Activated CD4-positive, alpha-beta T cell treated with anti-CD3 and anti-CD28 coated beads for 36 hours (primary cell): ENCODE measurements at regions of chr10 and their contacts with region 1.

Region 1: GRCh38 chr10:50624866-50625692 is 1.3 kb upstream of the SGMS1 start:
- DNase-seq: peak; percentile 76
- ATAC-seq: peak; percentile 30
- H3K4me3 Mint-ChIP-seq: peak overlapping the region; percentile 78
- H3K27ac Mint-ChIP-seq: peak overlapping the region; percentile 94
- H3K4me1 Mint-ChIP-seq: peaks cover 39% of the 10 kb centered on the region
- H3K27me3 Mint-ChIP-seq: no peaks in the 10 kb centered on the region

Region 2: GRCh38 chr10:49538381-49539319 is 1086.4 kb before region 1 on chr10 and contains the start of gene ERCC6:
- CTCF ChIA-PET with region 1: no interaction called
- POLR2A ChIA-PET with region 1: no interaction called
- intact Hi-C with region 1: loop called in 1 of 2 experiments (anchors 1 kb)
- DNase-seq: peak; percentile 98
- ATAC-seq: peak; percentile 96
- H3K4me3 Mint-ChIP-seq: peak within 1 kb of the TSS; percentile 78
- H3K27ac Mint-ChIP-seq: peak within 1 kb of the TSS; percentile 90
- H3K4me1 Mint-ChIP-seq: peaks cover 34% of the 10 kb centered on the region
- H3K27me3 Mint-ChIP-seq: peaks cover 9% of the 10 kb centered on the region
- total RNA-seq, gene ERCC6: 15.0 to 15.8 TPM

Region 3: DNA sequence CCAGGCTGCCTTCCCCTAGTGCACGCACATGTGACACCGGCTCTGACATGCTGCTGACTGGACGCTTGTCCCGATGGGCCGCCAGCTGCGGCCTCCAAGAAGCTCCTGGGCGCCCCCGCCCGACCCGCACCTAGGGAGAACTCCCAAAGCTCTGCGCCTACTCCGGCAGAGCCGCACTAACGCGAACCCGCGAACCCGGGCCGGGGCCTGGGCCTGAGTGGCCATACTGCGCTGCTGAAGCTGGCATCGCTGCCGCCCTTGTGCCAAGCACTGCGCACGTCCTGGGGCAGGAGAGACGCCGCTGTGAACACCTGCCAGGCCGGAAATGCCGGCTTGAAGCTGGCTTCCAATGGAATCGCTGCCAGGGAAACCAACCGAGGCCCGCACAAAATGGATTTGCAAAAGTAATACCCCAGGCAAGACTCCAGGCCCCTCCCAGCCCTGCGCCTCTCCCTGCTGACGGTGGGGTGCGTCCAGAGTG is 472.2 kb before region 1 on chr10:
- CTCF ChIA-PET with region 1: no interaction called
- POLR2A ChIA-PET with region 1: no interaction called
- intact Hi-C with region 1: no loop called
- DNase-seq: peak; percentile 9
- ATAC-seq: peak; percentile 19
- H3K4me3 Mint-ChIP-seq: no peak overlapping the region
- H3K27ac Mint-ChIP-seq: no peak overlapping the region
- H3K4me1 Mint-ChIP-seq: no peaks in the 10 kb centered on the region
- H3K27me3 Mint-ChIP-seq: peaks cover 14% of the 10 kb centered on the region

Region 4: DNA sequence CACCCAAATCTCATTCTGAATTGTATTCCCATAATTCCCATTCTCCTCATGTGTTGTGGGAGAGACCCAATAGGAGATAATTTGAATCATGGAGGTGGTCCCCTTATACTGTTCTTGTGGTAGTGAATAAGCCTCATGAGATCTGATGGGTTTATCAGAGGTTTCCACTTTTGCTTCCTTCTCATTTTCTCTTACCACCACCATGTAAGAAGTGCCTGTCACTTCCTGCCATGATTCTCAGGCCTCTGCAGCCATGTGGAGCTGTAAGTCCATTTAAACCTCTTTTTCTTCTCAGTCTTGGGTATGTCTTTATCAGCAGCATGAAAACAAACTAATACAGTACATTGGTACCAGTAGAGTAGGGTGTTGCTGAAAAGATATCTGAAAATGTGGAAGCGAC is 275.5 kb before region 1 on chr10:
- CTCF ChIA-PET with region 1: no interaction called
- POLR2A ChIA-PET with region 1: no interaction called
- intact Hi-C with region 1: no loop called
- DNase-seq: no peak
- ATAC-seq: no peak
- H3K4me3 Mint-ChIP-seq: no peak overlapping the region
- H3K27ac Mint-ChIP-seq: no peak overlapping the region
- H3K4me1 Mint-ChIP-seq: peaks cover 10% of the 10 kb centered on the region
- H3K27me3 Mint-ChIP-seq: no peaks in the 10 kb centered on the region

Region 5: GRCh38 chr10:50385624-50386023 is 239.5 kb before region 1 on chr10:
- CTCF ChIA-PET with region 1: no interaction called
- POLR2A ChIA-PET with region 1: no interaction called
- intact Hi-C with region 1: no loop called
- DNase-seq: no peak
- ATAC-seq: no peak
- H3K4me3 Mint-ChIP-seq: no peak overlapping the region
- H3K27ac Mint-ChIP-seq: no peak overlapping the region
- H3K4me1 Mint-ChIP-seq: peaks cover 18% of the 10 kb centered on the region
- H3K27me3 Mint-ChIP-seq: no peaks in the 10 kb centered on the region

Region 6: GRCh38 chr10:50431791-50432190 is 193.3 kb before region 1 on chr10:
- CTCF ChIA-PET with region 1: interaction called, 3 read pairs
- POLR2A ChIA-PET with region 1: no interaction called
- intact Hi-C with region 1: loop called (anchors 1 kb)
- DNase-seq: peak; percentile 42
- ATAC-seq: peak; percentile 69
- H3K4me3 Mint-ChIP-seq: no peak overlapping the region
- H3K27ac Mint-ChIP-seq: peak overlapping the region; percentile 49
- H3K4me1 Mint-ChIP-seq: peaks cover 30% of the 10 kb centered on the region
- H3K27me3 Mint-ChIP-seq: no peaks in the 10 kb centered on the region

Region 7: DNA sequence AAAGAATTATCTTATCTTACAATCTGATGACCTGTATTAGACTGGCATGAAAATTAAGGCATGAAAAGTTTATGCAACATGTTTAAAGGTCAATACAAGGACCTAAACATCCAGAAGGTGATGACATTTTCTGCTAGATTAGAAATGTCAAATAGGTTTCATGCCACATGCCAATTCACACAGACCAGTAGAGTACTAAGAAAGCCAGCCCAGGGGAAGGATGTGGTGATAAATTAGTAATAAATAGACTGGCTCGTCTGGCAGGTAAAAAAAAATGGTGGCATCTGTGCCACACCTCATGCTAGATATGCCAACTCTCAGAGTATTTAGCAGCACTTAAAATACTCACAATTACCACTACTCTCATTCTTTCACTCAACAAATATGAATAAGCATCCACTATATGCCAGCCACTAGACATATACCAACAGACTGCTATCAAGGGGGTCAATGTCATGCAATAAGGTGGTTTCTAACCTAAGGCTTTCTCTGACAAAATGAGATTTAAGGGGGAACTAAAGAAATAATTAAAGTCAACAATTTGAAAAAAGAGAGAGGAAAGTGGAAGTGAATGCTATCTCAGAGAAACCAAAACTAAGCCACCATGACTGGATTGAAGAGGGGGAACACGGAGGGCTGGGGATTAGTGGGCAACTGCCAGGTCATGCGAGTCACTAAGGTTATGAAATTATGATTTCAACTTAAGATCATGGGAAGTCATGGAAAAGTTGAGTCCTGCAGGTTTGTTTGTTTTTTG is 84.8 kb before region 1 on chr10:
- CTCF ChIA-PET with region 1: interaction called, 5 read pairs
- POLR2A ChIA-PET with region 1: interaction called, 4 read pairs
- intact Hi-C with region 1: loop called (anchors 1 to 5 kb)
- DNase-seq: peak; percentile 75
- ATAC-seq: peak; percentile 63
- H3K4me3 Mint-ChIP-seq: peak overlapping the region; percentile 35
- H3K27ac Mint-ChIP-seq: peak overlapping the region; percentile 80
- H3K4me1 Mint-ChIP-seq: peaks cover 93% of the 10 kb centered on the region
- H3K27me3 Mint-ChIP-seq: no peaks in the 10 kb centered on the region

Region 8: DNA sequence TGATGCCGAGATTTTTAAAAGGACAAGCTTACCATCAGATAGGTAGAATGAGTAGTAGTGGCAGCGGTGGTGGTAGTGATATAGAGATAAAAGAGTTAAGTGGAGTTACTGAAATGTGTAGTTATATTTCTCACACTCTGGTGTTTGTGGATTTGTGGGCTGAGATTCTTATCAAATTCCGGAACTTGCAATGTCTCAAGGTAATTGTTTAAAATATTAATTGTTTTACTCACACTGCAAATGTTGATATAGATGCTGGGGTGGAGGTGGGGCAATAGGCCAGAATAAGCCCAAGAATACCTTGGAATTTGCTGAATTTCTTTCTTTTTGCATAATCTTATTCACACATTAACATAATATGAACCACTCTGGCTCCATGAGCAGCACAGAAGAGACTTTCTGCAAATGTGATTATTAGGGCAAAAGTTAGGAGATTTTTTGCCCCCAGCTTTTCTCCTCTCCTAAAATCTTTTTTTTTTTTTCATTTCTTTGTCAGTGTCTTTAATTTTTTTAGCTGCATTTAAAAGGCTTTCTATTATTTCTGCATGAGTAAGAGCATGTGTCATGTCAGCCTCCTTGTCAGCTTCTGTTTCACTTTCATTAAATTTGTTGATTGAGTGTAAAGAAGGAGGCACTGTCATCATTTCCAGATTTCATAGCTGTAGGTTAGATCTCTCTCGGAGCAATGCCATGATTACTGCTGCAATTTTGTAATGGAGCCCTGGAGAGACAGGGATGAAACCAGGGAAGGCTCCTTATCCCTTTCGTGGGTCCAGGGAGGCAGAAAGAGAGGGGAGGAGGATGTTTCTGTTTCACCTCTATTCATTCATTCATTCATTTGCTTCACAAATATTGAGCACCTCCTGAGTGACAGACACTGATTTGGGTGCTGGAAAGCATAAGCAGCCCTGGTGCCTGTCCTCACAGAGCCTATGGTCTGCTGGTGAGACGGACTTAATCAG is 11.8 kb after region 1 on chr10:
- CTCF ChIA-PET with region 1: interaction called, 19 read pairs
- POLR2A ChIA-PET with region 1: interaction called, 4 read pairs
- intact Hi-C with region 1: loop called (anchors 1 kb)
- DNase-seq: peak; percentile 47
- ATAC-seq: peak; percentile 95
- H3K4me3 Mint-ChIP-seq: peak overlapping the region; percentile 9
- H3K27ac Mint-ChIP-seq: peak overlapping the region; percentile 24
- H3K4me1 Mint-ChIP-seq: peaks cover 28% of the 10 kb centered on the region
- H3K27me3 Mint-ChIP-seq: peaks cover 24% of the 10 kb centered on the region

Region 9: DNA sequence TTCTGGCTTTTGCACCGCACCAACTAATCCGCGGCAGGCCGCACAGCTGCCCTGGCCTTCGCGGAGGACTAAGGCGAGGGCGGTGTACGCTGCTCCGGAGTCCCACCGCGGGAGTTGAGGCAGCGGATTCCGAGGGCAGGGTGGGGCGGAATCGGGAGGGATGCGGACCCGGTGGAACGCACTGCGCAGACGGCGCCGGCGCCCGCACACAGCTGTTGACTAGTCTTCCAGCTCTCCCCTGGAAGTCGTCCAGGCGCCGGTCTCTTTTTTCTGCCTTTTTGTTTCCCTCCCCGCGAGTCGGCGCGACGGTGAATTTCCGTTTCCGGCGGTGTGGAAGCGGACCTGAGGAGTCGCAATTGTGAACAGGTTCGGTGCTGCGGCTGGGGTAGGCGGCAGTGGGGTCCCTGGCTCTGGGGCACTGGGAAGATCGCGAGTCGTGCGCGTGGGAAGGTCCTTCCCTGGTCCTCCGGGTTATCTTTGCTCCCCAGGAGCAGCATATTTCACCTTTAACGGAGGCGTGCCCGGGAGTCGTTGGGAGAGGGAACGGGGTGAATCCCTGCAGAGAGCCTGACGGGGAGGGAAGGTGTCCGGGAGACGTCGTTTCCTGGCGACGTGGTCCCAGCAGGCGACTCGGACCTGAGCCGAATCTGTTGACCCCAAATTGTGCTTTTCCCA is 114.7 kb after region 1 on chr10 and contains the start of gene ASAH2B:
- CTCF ChIA-PET with region 1: no interaction called
- POLR2A ChIA-PET with region 1: no interaction called
- intact Hi-C with region 1: loop called in 1 of 2 experiments (anchors 2 kb)
- DNase-seq: peak; percentile 88
- ATAC-seq: peak; percentile 87
- H3K4me3 Mint-ChIP-seq: peak within 1 kb of the TSS; percentile 99
- H3K27ac Mint-ChIP-seq: peak within 1 kb of the TSS; percentile 97
- H3K4me1 Mint-ChIP-seq: peaks cover 15% of the 10 kb centered on the region
- H3K27me3 Mint-ChIP-seq: peaks cover 1% of the 10 kb centered on the region
- total RNA-seq, gene ASAH2B: 5.9 to 10.3 TPM